ENCODE measurements at regions of chr17 and their contacts with region 1.

Region 1: GRCh38 chr17:21284319-21285163 is at the start of gene MAP2K3:
- DNase-seq: peak; percentile 99
- H3K4me3 ChIP-seq: peak within 1 kb of the TSS; percentile 88
- H3K27ac ChIP-seq: peak within 1 kb of the TSS; percentile 94
- H3K4me1 ChIP-seq: peaks cover 36% of the 10 kb centered on the region
- H3K27me3 ChIP-seq: no peaks in the 10 kb centered on the region
- CTCF ChIP-seq: no peak
- total RNA-seq, gene MAP2K3: 39.0 and 44.0 TPM in 2 replicates

Region 2: DNA sequence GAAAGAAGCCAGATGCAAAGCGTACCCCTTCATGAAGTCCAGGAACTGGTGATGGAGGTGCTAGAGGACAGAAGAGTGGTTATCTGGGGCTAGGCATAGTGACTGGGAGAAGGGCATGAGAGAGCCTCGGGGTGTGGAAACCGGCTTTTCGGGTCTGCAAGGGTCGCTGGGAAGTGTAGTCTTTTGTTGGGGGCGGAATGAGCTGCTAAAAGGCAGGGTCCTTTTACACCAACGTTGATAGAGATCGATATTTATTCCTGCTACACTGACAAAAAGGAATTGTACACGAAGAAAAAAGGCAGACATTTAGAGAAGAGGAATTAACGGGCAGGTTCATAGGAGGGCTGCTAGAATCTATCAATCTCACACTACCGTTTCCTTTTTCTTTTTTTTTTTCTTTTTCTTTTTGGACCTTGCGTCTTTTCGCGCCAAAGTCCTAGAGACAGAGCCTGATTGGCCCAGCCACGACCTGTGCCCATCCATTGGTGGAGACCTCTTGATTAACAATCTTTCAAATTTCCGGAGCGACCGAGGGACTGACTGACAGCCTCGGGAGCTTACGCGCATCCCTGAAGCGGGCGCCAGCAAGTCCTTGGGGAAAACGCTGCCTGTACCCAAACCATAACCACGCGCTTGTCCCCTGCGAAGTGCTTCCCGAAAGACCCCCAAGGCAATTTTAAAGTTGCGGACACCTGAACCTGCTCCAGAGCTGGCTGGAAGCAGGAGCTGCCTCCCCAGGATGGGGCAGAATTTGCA is 185.4 kb before region 1 on chr17:
- CTCF ChIA-PET with region 1: no interaction called
- POLR2A ChIA-PET with region 1: interaction called, 13 read pairs
- intact Hi-C with region 1: no loop called
- DNase-seq: peak; percentile 97
- H3K4me3 ChIP-seq: peak overlapping the region; percentile 66
- H3K27ac ChIP-seq: peak overlapping the region; percentile 91
- H3K4me1 ChIP-seq: peaks cover 4% of the 10 kb centered on the region
- H3K27me3 ChIP-seq: no peaks in the 10 kb centered on the region
- CTCF ChIP-seq: no peak

Region 3: GRCh38 chr17:21119247-21119918 is 165.2 kb before region 1 on chr17:
- CTCF ChIA-PET with region 1: interaction called, 13 read pairs
- POLR2A ChIA-PET with region 1: no interaction called
- intact Hi-C with region 1: no loop called
- DNase-seq: peak; percentile 69
- H3K4me3 ChIP-seq: peak overlapping the region; percentile 15
- H3K27ac ChIP-seq: no peak overlapping the region
- H3K4me1 ChIP-seq: no peaks in the 10 kb centered on the region
- H3K27me3 ChIP-seq: peaks cover 10% of the 10 kb centered on the region
- CTCF ChIP-seq: peak; percentile 92

Measured in A673 (cell line).